ENCODE measurements at regions of chr17 and their contacts with region 1.

Region 1: GRCh38 chr17:1029196-1029921 is 32.4 kb downstream of the TIMM22 start:
- DNase-seq: peak; percentile 70
- ATAC-seq: peak in 1 of 2 donors; percentile 21

Region 2: DNA sequence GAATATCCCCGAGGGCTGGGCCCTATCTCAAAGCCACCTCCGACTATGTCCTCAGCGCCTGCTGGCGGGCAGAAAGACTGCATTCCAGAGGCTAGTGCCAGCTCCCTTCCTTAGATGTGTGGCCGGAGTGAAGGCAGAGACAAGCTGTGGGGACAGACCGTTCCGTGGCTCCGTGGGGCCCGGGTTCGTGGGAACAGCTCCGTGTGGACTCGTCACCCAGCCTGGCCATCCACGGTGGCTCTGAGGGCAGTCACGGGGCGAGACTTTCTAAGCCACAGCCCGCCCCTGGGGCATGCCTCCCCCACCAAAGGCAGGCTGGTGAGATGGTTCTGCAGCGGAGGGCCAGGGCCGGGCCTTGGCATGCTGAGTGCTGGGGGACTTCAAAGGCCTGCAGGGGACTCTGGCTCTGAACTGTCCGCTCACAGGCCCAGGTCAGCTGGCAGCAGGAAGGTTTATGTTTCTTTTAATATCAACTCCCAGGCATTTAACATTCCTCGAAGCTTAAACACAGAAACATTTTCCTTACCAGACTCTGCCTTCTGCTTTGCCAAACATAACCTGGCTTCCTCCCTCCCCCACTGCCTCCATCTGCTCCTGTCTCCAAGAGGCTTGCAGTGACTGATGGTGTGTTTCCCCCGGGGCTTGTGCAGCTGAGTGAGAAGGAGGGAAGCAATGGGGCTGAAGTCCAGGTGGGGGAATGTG is 18.0 kb after region 1 on chr17:
- intact Hi-C with region 1: loop called in 1 of 2 experiments (anchors 2 kb)
- DNase-seq: peak; percentile 71
- ATAC-seq: peak; percentile 67 to 82

Measured in left cardiac atrium (tissue), 4 donors.